ENCODE measurements at regions of chr6 and their contacts with region 1.

Region 1: GRCh38 chr6:134063966-134064445 is 11.6 kb upstream of the SLC2A12 start:
- DNase-seq: peak; percentile 65
- ATAC-seq: peak; percentile 94
- H3K4me3 Mint-ChIP-seq: no peak overlapping the region
- H3K27ac Mint-ChIP-seq: no peak overlapping the region
- H3K4me1 Mint-ChIP-seq: no peaks in the 10 kb centered on the region
- H3K27me3 Mint-ChIP-seq: no peaks in the 10 kb centered on the region
- CTCF ChIP-seq: peak; percentile 84

Region 2: DNA sequence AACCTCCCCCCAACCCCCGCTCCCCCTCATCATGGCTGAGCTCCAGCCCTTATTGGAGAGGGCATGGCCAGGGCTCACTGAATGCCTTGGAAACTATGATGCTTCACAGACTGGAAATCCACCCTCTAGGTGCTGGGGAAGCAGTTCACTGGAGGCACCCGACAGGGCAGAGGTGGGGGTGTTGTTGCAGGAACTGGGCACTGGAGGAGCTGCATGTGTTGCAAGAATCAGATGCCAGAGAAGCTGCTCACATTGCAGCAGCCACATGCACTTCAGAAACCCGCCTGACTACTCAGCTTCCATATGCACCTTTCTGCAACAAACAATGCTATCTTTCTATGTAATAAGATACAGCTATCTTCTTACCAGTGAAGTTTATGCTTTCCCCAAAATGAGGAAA is 118.8 kb before region 1 on chr6:
- CTCF ChIA-PET with region 1: interaction called, 15 read pairs
- POLR2A ChIA-PET with region 1: no interaction called
- intact Hi-C with region 1: no loop called
- DNase-seq: no peak
- ATAC-seq: no peak
- H3K4me3 Mint-ChIP-seq: no peak overlapping the region
- H3K27ac Mint-ChIP-seq: no peak overlapping the region
- H3K4me1 Mint-ChIP-seq: no peaks in the 10 kb centered on the region
- H3K27me3 Mint-ChIP-seq: peaks cover 6% of the 10 kb centered on the region
- CTCF ChIP-seq: no peak

Region 3: DNA sequence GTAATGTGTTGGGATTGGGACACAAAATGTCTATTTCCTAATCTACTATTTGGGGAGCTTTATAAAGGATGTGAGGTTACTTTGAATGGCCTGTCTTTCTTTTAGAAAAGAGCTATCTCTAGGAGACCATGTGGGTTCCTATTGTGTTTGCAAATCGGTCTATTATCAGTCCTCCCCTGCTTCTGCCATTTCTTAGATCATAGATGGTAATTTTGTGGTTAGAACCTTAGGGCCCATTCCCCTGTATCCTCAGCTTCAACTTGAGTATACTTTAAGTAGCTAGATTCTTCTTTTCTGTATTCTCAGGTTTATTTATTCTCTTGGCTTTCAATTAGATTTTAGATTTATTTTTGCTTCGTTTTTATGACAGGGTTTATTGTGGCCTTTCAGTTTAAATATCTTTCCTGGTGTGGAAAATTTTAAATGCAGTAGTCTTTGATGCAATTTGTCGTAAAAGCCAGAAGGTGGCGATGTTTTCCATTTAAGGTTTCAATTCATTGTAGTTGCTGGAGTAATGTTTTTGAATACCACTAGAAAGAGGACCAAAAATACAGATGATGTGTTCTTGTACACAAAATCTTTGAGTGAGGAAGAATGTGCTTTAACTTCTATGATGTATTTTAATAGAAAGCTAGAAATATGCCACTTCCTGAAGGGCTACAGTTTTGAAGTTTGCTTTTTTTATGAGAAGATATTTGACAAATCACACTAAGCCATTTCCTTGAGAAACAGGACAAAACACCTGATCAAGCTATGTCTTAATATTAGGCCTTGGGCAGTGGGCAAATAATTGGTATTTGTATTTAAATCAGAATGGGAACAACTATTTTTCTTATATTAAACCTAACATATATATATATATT is 90.7 kb before region 1 on chr6:
- CTCF ChIA-PET with region 1: interaction called, 201 read pairs
- POLR2A ChIA-PET with region 1: interaction called, 3 read pairs
- intact Hi-C with region 1: loop called (anchors 2 kb)
- DNase-seq: no peak
- ATAC-seq: peak; percentile 78
- H3K4me3 Mint-ChIP-seq: no peak overlapping the region
- H3K27ac Mint-ChIP-seq: peak overlapping the region; percentile 52
- H3K4me1 Mint-ChIP-seq: peaks cover 50% of the 10 kb centered on the region
- H3K27me3 Mint-ChIP-seq: no peaks in the 10 kb centered on the region
- CTCF ChIP-seq: peak; percentile 89

Region 4: GRCh38 chr6:134014588-134015137 is 49.3 kb before region 1 on chr6:
- CTCF ChIA-PET with region 1: interaction called, 10 read pairs
- POLR2A ChIA-PET with region 1: no interaction called
- intact Hi-C with region 1: no loop called
- DNase-seq: no peak
- ATAC-seq: no peak
- H3K4me3 Mint-ChIP-seq: no peak overlapping the region
- H3K27ac Mint-ChIP-seq: no peak overlapping the region
- H3K4me1 Mint-ChIP-seq: peaks cover 12% of the 10 kb centered on the region
- H3K27me3 Mint-ChIP-seq: peaks cover 2% of the 10 kb centered on the region
- CTCF ChIP-seq: no peak

Region 5: DNA sequence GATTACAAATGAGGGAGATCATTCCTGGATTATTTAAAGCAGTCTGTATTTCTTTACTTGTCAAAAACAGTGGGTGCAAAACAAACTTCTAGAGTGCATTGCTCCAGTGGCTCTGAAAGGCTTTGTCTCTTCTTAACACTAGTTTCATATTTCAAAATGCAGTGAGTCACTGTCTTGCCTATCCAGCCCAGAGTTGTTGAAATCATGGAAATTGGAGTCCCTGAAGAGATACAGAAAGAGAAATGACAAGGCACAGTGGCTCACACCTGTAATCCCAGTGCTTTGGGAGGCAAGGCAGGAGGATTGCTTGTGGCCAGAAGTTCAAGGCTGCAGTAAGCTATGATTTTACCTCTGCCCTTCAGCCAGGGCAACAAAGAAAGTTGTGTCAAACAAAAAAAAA is 22.9 kb before region 1 on chr6:
- CTCF ChIA-PET with region 1: interaction called, 12 read pairs
- POLR2A ChIA-PET with region 1: no interaction called
- intact Hi-C with region 1: no loop called
- DNase-seq: no peak
- ATAC-seq: no peak
- H3K4me3 Mint-ChIP-seq: no peak overlapping the region
- H3K27ac Mint-ChIP-seq: no peak overlapping the region
- H3K4me1 Mint-ChIP-seq: no peaks in the 10 kb centered on the region
- H3K27me3 Mint-ChIP-seq: peaks cover 3% of the 10 kb centered on the region
- CTCF ChIP-seq: no peak

Region 6: DNA sequence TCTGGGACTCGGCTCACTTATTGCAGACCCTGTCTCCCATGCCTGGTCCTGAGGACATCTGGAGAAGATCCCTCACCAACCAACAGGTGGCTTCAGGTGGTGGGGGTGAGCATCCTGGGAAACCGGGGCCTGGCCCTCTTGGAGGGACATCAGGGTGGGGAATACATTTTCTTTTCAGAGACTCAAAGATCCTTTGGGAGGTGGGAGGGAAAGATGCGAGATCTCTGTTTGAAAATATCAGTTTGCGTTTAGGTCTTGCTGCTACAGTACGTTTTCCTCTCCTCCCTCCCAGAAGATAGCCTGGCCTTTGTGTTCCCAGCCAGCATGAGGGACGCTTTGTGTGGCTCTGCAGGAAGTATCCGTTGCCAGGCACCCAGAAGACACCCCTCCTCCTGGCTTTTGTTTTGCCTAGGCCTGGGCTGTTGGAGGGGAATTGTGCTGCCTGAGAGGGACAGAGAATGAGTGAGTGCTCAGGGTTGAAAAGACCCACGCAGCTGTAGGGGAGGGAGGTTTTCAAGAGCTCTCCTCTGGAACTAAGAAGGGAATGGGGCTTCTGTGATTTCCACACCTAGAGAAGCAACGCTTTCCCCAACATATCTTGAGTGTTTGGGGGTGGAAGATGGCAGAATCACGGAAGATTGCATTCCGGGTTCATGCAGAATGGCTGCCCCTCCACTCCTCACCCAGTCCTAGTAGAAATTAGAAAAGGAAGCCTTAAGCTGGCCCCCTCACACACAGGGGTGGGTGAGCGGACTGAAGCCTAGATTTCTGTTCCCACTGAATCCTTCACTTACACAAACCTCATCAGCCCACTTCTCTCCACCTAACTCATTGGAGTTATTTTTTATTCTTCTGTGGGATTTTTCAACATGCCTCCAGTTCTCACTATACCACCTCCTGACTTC is 10.4 kb after region 1 on chr6:
- CTCF ChIA-PET with region 1: interaction called, 29 read pairs
- POLR2A ChIA-PET with region 1: no interaction called
- intact Hi-C with region 1: no loop called
- DNase-seq: no peak
- ATAC-seq: no peak
- H3K4me3 Mint-ChIP-seq: no peak overlapping the region
- H3K27ac Mint-ChIP-seq: no peak overlapping the region
- H3K4me1 Mint-ChIP-seq: peaks cover 4% of the 10 kb centered on the region
- H3K27me3 Mint-ChIP-seq: no peaks in the 10 kb centered on the region
- CTCF ChIP-seq: no peak

Region 7: GRCh38 chr6:134097114-134097707 is 33.2 kb after region 1 on chr6:
- CTCF ChIA-PET with region 1: interaction called, 53 read pairs
- POLR2A ChIA-PET with region 1: no interaction called
- intact Hi-C with region 1: no loop called
- DNase-seq: peak; percentile 72
- ATAC-seq: peak; percentile 49
- H3K4me3 Mint-ChIP-seq: no peak overlapping the region
- H3K27ac Mint-ChIP-seq: no peak overlapping the region
- H3K4me1 Mint-ChIP-seq: no peaks in the 10 kb centered on the region
- H3K27me3 Mint-ChIP-seq: peaks cover 14% of the 10 kb centered on the region
- CTCF ChIP-seq: peak; percentile 67

Measured in activated CD8-positive, alpha-beta T cell treated with anti-CD3 and anti-CD28 coated beads for 36 hours (primary cell).